Vagina (tissue), 2 donors: ENCODE measurements at regions of chrX and their contacts with region 1.

Region 1: GRCh38 chrX:69597399-69597798 is 18.5 kb upstream of the EDA start:
- DNase-seq: no peak
- H3K4me3 ChIP-seq: no peak overlapping the region
- H3K27ac ChIP-seq: no peak overlapping the region
- H3K4me1 ChIP-seq: no peaks in the 10 kb centered on the region
- H3K27me3 ChIP-seq: no peaks in the 10 kb centered on the region
- CTCF ChIP-seq: no peak
- POLR2A ChIP-seq: no peak

Region 2: GRCh38 chrX:67622053-67622585 is 1975.3 kb before region 1 on chrX:
- intact Hi-C with region 1: no loop called
- DNase-seq: no peak
- H3K4me3 ChIP-seq: no peak overlapping the region
- H3K27ac ChIP-seq: no peak overlapping the region
- H3K4me1 ChIP-seq: no peaks in the 10 kb centered on the region
- H3K27me3 ChIP-seq: no peaks in the 10 kb centered on the region
- CTCF ChIP-seq: no peak
- POLR2A ChIP-seq: no peak

Region 3: DNA sequence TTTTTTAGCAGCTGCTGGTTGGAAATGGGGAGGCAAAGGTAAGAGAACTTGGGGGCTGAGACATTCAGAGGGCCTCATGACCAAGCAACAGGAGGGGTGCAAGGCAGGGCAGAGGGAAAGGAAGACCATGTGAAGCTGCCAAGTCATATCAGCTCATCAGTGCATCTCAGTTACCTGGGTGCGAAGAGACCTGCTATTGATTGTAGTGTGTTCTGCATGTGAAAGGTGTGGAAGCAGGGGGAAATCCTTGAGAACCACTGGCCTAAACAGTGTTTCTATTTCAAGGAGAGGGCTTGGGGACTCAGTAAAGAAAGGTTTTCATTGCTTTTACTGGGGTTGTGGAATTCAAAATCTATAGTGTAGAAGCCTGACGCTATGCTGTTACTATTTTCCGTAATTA is 28.6 kb before region 1 on chrX:
- intact Hi-C with region 1: no loop called
- DNase-seq: no peak
- H3K4me3 ChIP-seq: no peak overlapping the region
- H3K27ac ChIP-seq: no peak overlapping the region
- H3K4me1 ChIP-seq: no peaks in the 10 kb centered on the region
- H3K27me3 ChIP-seq: no peaks in the 10 kb centered on the region
- CTCF ChIP-seq: no peak
- POLR2A ChIP-seq: no peak

Region 4: DNA sequence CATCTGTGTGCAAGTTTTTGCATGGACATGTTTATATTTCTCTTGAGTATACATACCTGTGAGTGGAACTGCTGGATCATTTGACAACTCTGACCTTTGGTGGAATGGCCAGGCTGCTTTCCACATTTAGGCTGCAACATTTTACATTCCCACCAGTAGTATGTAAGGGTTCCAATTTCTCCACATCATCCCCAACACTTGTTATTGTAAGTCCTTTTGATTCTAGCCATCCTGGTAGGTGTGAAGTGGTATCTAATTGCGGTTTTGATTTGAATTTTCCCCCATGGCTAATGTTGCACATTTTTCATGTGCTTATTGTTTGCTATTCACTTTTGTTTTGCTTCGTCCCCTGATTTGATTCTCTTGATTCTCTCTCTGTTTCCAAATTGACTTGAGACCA is 863.6 kb after region 1 on chrX:
- intact Hi-C with region 1: loop called (anchors 5 kb)
- DNase-seq: no peak
- H3K4me3 ChIP-seq: no peak overlapping the region
- H3K27ac ChIP-seq: no peak overlapping the region
- H3K4me1 ChIP-seq: no peaks in the 10 kb centered on the region
- H3K27me3 ChIP-seq: no peaks in the 10 kb centered on the region
- CTCF ChIP-seq: no peak
- POLR2A ChIP-seq: no peak